Endothelial cell of umbilical vein (primary cell): ENCODE measurements at regions of chr3 and their contacts with region 1.

Region 1: GRCh38 chr3:81425198-81425868 is 336.1 kb downstream of the GBE1 start:
- DNase-seq: peak; percentile 89
- H3K4me3 ChIP-seq: peak overlapping the region in 1 of 3 experiments; percentile 38
- H3K27ac ChIP-seq: peak overlapping the region; percentile 97
- H3K4me1 ChIP-seq: peaks cover 27% of the 10 kb centered on the region
- H3K27me3 ChIP-seq: no peaks in the 10 kb centered on the region
- CTCF ChIP-seq: no peak
- POLR2A ChIP-seq: no peak

Region 2: DNA sequence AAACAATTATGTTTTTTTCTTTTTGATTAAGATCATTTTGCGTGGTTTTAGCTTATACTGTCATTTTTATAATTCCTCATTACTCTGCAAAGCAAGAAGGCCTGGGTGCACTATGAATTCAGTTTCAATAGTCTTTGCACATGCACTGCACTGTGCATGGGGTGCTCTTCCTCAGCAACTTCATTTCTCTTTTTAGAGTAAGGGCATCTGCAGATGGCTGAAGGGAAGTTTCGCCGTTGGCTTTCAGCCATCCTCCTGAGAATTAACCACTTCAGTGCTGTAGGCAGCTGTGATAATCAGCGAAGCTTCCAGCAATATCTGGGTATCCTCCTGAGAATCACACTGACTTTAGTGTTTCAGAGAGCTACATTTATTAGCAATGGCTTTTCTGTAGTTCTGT is 51.4 kb after region 1 on chr3:
- CTCF ChIA-PET with region 1: interaction called, 6 read pairs
- POLR2A ChIA-PET with region 1: no interaction called
- dilution Hi-C with region 1: no loop called
- intact Hi-C with region 1: loop called (anchors 1 kb)
- DNase-seq: no peak
- H3K4me3 ChIP-seq: no peak overlapping the region
- H3K27ac ChIP-seq: no peak overlapping the region
- H3K4me1 ChIP-seq: peaks cover 26% of the 10 kb centered on the region
- H3K27me3 ChIP-seq: no peaks in the 10 kb centered on the region
- CTCF ChIP-seq: no peak
- POLR2A ChIP-seq: no peak

Region 3: DNA sequence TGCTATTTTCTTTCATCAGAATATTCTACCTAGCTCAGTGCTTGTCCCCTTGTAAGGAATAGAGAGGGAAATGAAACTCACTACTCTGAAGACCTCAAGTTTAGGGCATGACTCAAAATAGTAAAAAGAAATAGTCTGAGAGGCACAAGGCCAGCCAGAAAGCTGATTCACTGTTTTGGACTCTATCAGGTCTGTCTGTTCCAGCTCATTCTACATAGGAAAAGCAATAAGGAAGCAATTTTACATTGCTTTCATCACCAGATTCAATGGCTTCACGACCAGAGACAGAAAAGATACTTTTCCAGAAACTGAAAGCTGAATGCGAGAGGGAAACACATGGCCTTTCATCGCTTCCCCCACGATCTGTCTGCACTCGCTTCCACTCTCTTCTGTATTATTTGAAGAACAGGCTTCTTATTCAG is 60.1 kb after region 1 on chr3:
- CTCF ChIA-PET with region 1: interaction called, 64 read pairs
- POLR2A ChIA-PET with region 1: no interaction called
- dilution Hi-C with region 1: no loop called
- intact Hi-C with region 1: loop called (anchors 2 kb)
- DNase-seq: peak; percentile 93
- H3K4me3 ChIP-seq: peak overlapping the region in 1 of 3 experiments; percentile 3
- H3K27ac ChIP-seq: peak overlapping the region; percentile 37
- H3K4me1 ChIP-seq: peaks cover 10% of the 10 kb centered on the region
- H3K27me3 ChIP-seq: no peaks in the 10 kb centered on the region
- CTCF ChIP-seq: no peak
- POLR2A ChIP-seq: no peak

Region 4: GRCh38 chr3:81723732-81724313 is 298.5 kb after region 1 on chr3:
- CTCF ChIA-PET with region 1: no interaction called
- POLR2A ChIA-PET with region 1: no interaction called
- dilution Hi-C with region 1: no loop called
- intact Hi-C with region 1: loop called (anchors 10 kb)
- DNase-seq: peak; percentile 78
- H3K4me3 ChIP-seq: no peak overlapping the region
- H3K27ac ChIP-seq: peak overlapping the region; percentile 84
- H3K4me1 ChIP-seq: peaks cover 50% of the 10 kb centered on the region
- H3K27me3 ChIP-seq: no peaks in the 10 kb centered on the region
- CTCF ChIP-seq: no peak
- POLR2A ChIP-seq: no peak